ENCODE measurements at regions of chr15 and their contacts with region 1.

Region 1: DNA sequence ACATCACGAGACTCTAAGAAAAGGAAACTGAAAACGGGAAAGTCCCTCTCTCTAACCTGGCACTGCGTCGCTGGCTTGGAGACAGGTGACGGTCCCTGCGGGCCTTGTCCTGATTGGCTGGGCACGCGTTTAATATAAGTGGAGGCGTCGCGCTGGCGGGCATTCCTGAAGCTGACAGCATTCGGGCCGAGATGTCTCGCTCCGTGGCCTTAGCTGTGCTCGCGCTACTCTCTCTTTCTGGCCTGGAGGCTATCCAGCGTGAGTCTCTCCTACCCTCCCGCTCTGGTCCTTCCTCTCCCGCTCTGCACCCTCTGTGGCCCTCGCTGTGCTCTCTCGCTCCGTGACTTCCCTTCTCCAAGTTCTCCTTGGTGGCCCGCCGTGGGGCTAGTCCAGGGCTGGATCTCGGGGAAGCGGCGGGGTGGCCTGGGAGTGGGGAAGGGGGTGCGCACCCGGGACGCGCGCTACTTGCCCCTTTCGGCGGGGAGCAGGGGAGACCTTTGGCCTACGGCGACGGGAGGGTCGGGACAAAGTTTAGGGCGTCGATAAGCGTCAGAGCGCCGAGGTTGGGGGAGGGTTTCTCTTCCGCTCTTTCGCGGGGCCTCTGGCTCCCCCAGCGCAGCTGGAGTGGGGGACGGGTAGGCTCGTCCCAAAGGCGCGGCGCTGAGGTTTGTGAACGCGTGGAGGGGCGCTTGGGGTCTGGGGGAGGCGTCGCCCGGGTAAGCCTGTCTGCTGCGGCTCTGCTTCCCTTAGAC is at the start of gene B2M:
- DNase-seq: peak; percentile 92 to 99 (median 95)
- ATAC-seq: peak; percentile 78
- H3K4me3 ChIP-seq: peak within 1 kb of the TSS; percentile 90 to 99
- H3K4me3 Mint-ChIP-seq: peak within 1 kb of the TSS; percentile 100
- H3K27ac ChIP-seq: peak within 1 kb of the TSS; percentile 97 to 98
- H3K27ac Mint-ChIP-seq: peak within 1 kb of the TSS; percentile 100
- H3K4me1 ChIP-seq: peaks cover 35% of the 10 kb centered on the region
- H3K4me1 Mint-ChIP-seq: peaks cover 54% of the 10 kb centered on the region
- H3K27me3 ChIP-seq: no peaks in the 10 kb centered on the region
- H3K27me3 Mint-ChIP-seq: no peaks in the 10 kb centered on the region
- CTCF ChIP-seq: no peak
- total RNA-seq, gene B2M: 4,250 to 4,545 TPM

Region 2: DNA sequence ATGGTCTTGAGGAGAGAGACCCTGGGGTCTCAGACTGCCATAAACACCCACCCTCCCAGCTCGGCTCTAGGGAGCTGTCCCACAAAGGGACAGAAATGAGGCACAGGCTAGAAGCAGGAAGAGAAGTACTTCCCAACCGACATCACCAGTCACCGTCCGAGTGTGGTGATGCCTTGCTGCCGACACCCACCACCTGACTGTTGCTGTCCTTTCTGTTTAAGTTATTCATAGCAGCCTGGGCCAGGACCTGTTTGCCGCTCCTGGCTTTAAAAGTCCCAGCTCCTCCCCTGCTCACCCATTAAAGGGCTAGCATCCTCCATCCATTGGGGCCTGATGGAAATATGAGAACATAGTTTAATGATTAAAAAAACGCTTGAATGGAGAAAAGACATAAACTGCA is 34.9 kb before region 1 on chr15:
- CTCF ChIA-PET with region 1: interaction called, 42 read pairs
- POLR2A ChIA-PET with region 1: interaction called, 1,993 read pairs
- intact Hi-C with region 1: no loop called
- DNase-seq: peak in 5 of 9 experiments; percentile 21 to 70 (median 41)
- ATAC-seq: peak; percentile 39
- H3K4me3 ChIP-seq: peak overlapping the region; percentile 41 to 43
- H3K4me3 Mint-ChIP-seq: peak overlapping the region; percentile 73
- H3K27ac ChIP-seq: peak overlapping the region; percentile 42 to 89
- H3K27ac Mint-ChIP-seq: peak overlapping the region; percentile 94
- H3K4me1 ChIP-seq: peaks cover 91% of the 10 kb centered on the region
- H3K4me1 Mint-ChIP-seq: peaks cover 89% of the 10 kb centered on the region
- H3K27me3 ChIP-seq: no peaks in the 10 kb centered on the region
- H3K27me3 Mint-ChIP-seq: no peaks in the 10 kb centered on the region
- CTCF ChIP-seq: no peak

Region 3: GRCh38 chr15:44682211-44682610 is 29.3 kb before region 1 on chr15:
- CTCF ChIA-PET with region 1: interaction called, 42 read pairs
- POLR2A ChIA-PET with region 1: interaction called, 1,993 read pairs
- intact Hi-C with region 1: loop called in 1 of 2 experiments (anchors 1 kb)
- DNase-seq: no peak
- ATAC-seq: no peak
- H3K4me3 ChIP-seq: peak overlapping the region in 1 of 2 experiments; percentile 27
- H3K4me3 Mint-ChIP-seq: peak overlapping the region; percentile 61
- H3K27ac ChIP-seq: peak overlapping the region in 1 of 2 experiments; percentile 77
- H3K27ac Mint-ChIP-seq: peak overlapping the region; percentile 88
- H3K4me1 ChIP-seq: peaks cover 75% of the 10 kb centered on the region
- H3K4me1 Mint-ChIP-seq: peaks cover 89% of the 10 kb centered on the region
- H3K27me3 ChIP-seq: no peaks in the 10 kb centered on the region
- H3K27me3 Mint-ChIP-seq: no peaks in the 10 kb centered on the region
- CTCF ChIP-seq: no peak

Region 4: DNA sequence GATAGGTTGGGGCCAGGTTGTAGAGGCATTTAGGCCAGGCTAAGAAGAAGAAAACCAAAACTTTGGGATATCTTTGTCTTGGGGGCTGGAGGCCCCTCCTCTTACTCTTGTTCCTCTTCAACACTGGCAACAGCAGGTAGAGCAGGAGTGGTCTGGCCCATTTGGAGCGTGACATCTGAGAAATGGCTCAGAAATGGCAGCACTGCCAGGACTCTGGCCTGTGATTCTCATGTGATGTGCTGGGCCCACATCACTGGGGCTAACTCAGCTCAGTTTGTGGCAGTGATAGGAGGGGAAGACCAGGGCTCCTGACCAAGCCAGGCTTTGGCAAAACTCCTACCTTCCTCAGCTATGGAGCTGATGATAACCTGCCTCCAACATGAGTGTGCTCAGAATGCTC is 18.9 kb before region 1 on chr15:
- CTCF ChIA-PET with region 1: interaction called, 11 read pairs
- POLR2A ChIA-PET with region 1: interaction called, 1,993 read pairs
- intact Hi-C with region 1: loop called (anchors 2 kb)
- DNase-seq: no peak
- ATAC-seq: no peak
- H3K4me3 ChIP-seq: no peak overlapping the region
- H3K4me3 Mint-ChIP-seq: no peak overlapping the region
- H3K27ac ChIP-seq: no peak overlapping the region
- H3K27ac Mint-ChIP-seq: no peak overlapping the region
- H3K4me1 ChIP-seq: peaks cover 6% of the 10 kb centered on the region
- H3K4me1 Mint-ChIP-seq: peaks cover 55% of the 10 kb centered on the region
- H3K27me3 ChIP-seq: no peaks in the 10 kb centered on the region
- H3K27me3 Mint-ChIP-seq: no peaks in the 10 kb centered on the region
- CTCF ChIP-seq: no peak

Region 5: GRCh38 chr15:44698641-44699040 is 12.9 kb before region 1 on chr15:
- CTCF ChIA-PET with region 1: interaction called, 5 read pairs
- POLR2A ChIA-PET with region 1: interaction called, 68 read pairs
- intact Hi-C with region 1: loop called in 1 of 2 experiments (anchors 2 kb)
- DNase-seq: no peak
- ATAC-seq: no peak
- H3K4me3 ChIP-seq: no peak overlapping the region
- H3K4me3 Mint-ChIP-seq: no peak overlapping the region
- H3K27ac ChIP-seq: no peak overlapping the region
- H3K27ac Mint-ChIP-seq: no peak overlapping the region
- H3K4me1 ChIP-seq: no peaks in the 10 kb centered on the region
- H3K4me1 Mint-ChIP-seq: peaks cover 31% of the 10 kb centered on the region
- H3K27me3 ChIP-seq: no peaks in the 10 kb centered on the region
- H3K27me3 Mint-ChIP-seq: no peaks in the 10 kb centered on the region
- CTCF ChIP-seq: no peak

Region 6: GRCh38 chr15:44728576-44729407 is 17.3 kb after region 1 on chr15:
- CTCF ChIA-PET with region 1: interaction called, 368 read pairs
- POLR2A ChIA-PET with region 1: interaction called, 1,284 read pairs
- intact Hi-C with region 1: loop called (anchors 1 kb)
- DNase-seq: peak; percentile 88 to 98 (median 95)
- ATAC-seq: peak; percentile 77
- H3K4me3 ChIP-seq: peak overlapping the region; percentile 84 to 95
- H3K4me3 Mint-ChIP-seq: peak overlapping the region; percentile 99
- H3K27ac ChIP-seq: peak overlapping the region; percentile 93 to 95
- H3K27ac Mint-ChIP-seq: peak overlapping the region; percentile 100
- H3K4me1 ChIP-seq: peaks cover 75% of the 10 kb centered on the region
- H3K4me1 Mint-ChIP-seq: peaks cover 80% of the 10 kb centered on the region
- H3K27me3 ChIP-seq: no peaks in the 10 kb centered on the region
- H3K27me3 Mint-ChIP-seq: no peaks in the 10 kb centered on the region
- CTCF ChIP-seq: no peak

Region 7: DNA sequence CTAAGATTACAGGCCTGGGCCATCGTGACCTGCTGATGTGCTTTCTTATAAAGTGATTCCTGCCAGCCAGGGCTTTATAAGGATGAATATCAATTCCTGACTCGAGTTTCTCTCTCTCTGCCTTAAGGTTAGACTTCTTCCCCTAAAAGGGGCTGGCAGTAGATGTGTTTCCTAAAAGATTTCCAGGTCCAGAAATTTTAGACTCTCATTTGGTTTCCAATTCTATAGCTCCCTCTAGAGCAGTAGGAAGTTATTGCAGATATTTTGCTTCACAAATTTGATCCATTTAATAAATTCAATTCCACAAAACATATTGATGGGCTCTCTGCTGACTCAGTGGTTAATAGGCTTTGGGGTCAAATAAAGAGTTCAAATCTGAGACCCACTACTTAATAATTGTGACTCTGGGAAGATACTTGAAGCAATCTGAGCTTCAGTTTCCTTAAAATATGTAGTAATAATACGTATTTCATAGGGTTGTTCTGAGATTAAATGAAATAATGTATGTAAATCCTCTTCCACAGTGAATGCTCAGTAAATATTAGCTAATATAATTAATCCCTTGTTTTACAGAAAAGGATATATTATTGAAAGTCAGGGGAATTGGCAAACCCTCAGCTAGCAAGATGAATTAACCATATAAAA is 26.9 kb after region 1 on chr15:
- CTCF ChIA-PET with region 1: interaction called, 368 read pairs
- POLR2A ChIA-PET with region 1: interaction called, 1,284 read pairs
- intact Hi-C with region 1: loop called (anchors 1 kb)
- DNase-seq: peak in 2 of 9 experiments; percentile 69 to 78
- ATAC-seq: no peak
- H3K4me3 ChIP-seq: no peak overlapping the region
- H3K4me3 Mint-ChIP-seq: peak overlapping the region; percentile 15
- H3K27ac ChIP-seq: peak overlapping the region in 1 of 2 experiments; percentile 91
- H3K27ac Mint-ChIP-seq: peak overlapping the region; percentile 78
- H3K4me1 ChIP-seq: peaks cover 50% of the 10 kb centered on the region
- H3K4me1 Mint-ChIP-seq: peaks cover 57% of the 10 kb centered on the region
- H3K27me3 ChIP-seq: no peaks in the 10 kb centered on the region
- H3K27me3 Mint-ChIP-seq: no peaks in the 10 kb centered on the region
- CTCF ChIP-seq: peak; percentile 78

Region 8: GRCh38 chr15:44836094-44836493 is 124.6 kb after region 1 on chr15:
- CTCF ChIA-PET with region 1: no interaction called
- POLR2A ChIA-PET with region 1: no interaction called
- intact Hi-C with region 1: no loop called
- DNase-seq: no peak
- ATAC-seq: no peak
- H3K4me3 ChIP-seq: no peak overlapping the region
- H3K4me3 Mint-ChIP-seq: no peak overlapping the region
- H3K27ac ChIP-seq: no peak overlapping the region
- H3K27ac Mint-ChIP-seq: no peak overlapping the region
- H3K4me1 ChIP-seq: peaks cover 2% of the 10 kb centered on the region
- H3K4me1 Mint-ChIP-seq: peaks cover 3% of the 10 kb centered on the region
- H3K27me3 ChIP-seq: no peaks in the 10 kb centered on the region
- H3K27me3 Mint-ChIP-seq: no peaks in the 10 kb centered on the region
- CTCF ChIP-seq: no peak